ENCODE measurements at regions of chr10 and their contacts with region 1.

Region 1: DNA sequence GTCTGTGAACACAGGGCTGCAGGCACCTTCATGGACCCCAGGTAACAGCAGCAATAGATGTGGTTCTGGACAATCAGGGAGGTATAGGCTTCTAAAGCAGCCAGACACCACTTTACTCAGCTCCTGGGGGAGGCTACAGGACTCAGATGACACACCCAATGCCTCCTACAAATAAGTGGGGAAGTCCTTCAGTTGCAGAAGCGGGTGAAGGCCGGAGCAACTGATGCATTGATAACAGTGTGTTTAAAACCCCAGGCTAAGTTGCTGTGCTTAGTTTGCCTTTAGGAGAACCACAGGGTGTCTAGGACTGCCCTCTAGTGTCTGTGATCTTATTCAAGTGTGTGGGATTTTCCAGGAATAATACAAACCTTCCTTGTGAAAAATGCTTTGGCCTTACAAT is 5.9 kb upstream of the ITGA8 start:
- DNase-seq: peak; percentile 31 to 64 (median 52)
- H3K4me3 ChIP-seq: no peak overlapping the region
- H3K27ac ChIP-seq: no peak overlapping the region
- H3K4me1 ChIP-seq: peaks cover 3 to 5% of the 10 kb centered on the region in 2 donors
- H3K27me3 ChIP-seq: no peaks in the 10 kb centered on the region
- CTCF ChIP-seq: peak; percentile 25 to 65 (median 59)
- POLR2A ChIP-seq: no peak

Region 2: GRCh38 chr10:15585303-15585715 is 140.3 kb before region 1 on chr10:
- intact Hi-C with region 1: loop called in 1 of 2 experiments (anchors 10 kb)
- DNase-seq: peak; percentile 63 to 87 (median 72)
- H3K4me3 ChIP-seq: no peak overlapping the region
- H3K27ac ChIP-seq: no peak overlapping the region
- H3K4me1 ChIP-seq: no peaks in the 10 kb centered on the region
- H3K27me3 ChIP-seq: no peaks in the 10 kb centered on the region
- CTCF ChIP-seq: peak; percentile 62 to 85 (median 70)
- POLR2A ChIP-seq: no peak

Region 3: GRCh38 chr10:15824498-15824897 is 98.9 kb after region 1 on chr10:
- intact Hi-C with region 1: loop called in 1 of 2 experiments (anchors 10 kb)
- DNase-seq: no peak
- H3K4me3 ChIP-seq: no peak overlapping the region
- H3K27ac ChIP-seq: no peak overlapping the region
- H3K4me1 ChIP-seq: no peaks in the 10 kb centered on the region
- H3K27me3 ChIP-seq: no peaks in the 10 kb centered on the region
- CTCF ChIP-seq: peak; percentile 32 to 76 (median 56)
- POLR2A ChIP-seq: no peak